Astrocyte of the cerebellum (primary cell): ENCODE measurements at regions of chr3 and their contacts with region 1.

Region 1: GRCh38 chr3:100561459-100562158 is 47.8 kb upstream of the ADGRG7 start:
- DNase-seq: peak; percentile 46
- H3K4me3 ChIP-seq: no peak overlapping the region
- CTCF ChIP-seq: no peak

Region 2: GRCh38 chr3:100465892-100466777 is 95.5 kb before region 1 on chr3:
- in situ Hi-C with region 1: loop called (anchors 5 kb)
- DNase-seq: no peak
- H3K4me3 ChIP-seq: no peak overlapping the region
- CTCF ChIP-seq: no peak